Heart right ventricle (tissue), 16 donors: ENCODE measurements at regions of chr19 and their contacts with region 1.

Region 1: DNA sequence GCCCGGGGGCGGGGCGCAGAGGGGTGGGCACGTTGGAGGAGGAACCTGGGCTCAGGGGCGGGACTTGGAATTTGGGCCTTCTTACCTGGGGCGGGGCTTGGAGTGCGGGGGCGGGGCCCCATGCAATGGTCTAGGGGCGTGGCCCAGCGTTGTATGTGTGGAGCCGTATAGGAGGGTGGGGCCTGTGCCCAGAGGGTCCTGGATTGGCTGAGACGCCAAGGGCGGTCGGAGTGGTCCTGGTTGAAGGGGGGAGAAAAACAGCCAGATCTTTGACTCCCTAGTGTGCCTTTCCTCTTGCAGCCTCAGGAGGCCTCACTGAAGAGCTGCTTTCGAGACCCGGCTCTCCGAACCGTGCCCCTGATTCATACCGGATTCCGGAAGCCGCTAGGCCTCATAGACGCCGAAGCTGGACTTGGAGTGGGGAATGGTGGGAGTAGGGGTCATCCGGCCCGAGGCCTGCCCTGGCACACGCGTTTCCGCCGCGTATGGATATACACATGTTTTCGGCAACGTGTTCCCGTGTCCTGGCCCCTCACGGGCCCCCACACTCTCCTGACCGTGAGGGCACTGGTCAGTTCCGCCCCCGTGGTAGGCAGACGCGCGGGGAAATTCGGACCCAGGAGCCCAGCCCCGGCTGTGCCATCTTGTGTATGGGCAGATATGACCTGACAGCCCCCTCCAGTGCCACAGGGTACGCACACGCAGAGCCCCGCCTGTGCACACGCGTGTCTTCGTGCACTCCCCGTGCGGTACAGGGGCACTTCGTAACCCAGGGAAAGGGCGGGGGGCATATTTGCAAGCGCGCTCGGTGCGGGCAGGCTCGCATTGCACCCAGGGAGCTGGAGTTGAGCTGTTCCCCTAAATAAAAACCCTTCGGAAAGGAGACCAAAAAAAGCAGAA is 661 bp upstream of the PRR12 start:
- DNase-seq: peak; percentile 94 to 95
- ATAC-seq: peak; percentile 79 to 91 (median 88)
- H3K4me3 ChIP-seq: peak overlapping the region; percentile 65 to 89 (median 81)
- H3K27ac ChIP-seq: peak overlapping the region; percentile 76 to 98 (median 92)
- H3K4me1 ChIP-seq: peaks cover 6 to 37% (median 22%) of the 10 kb centered on the region in 9 donors
- H3K27me3 ChIP-seq: no peaks in the 10 kb centered on the region
- CTCF ChIP-seq: peak in 3 of 9 donors; percentile 10 to 25 (median 25)

Region 2: DNA sequence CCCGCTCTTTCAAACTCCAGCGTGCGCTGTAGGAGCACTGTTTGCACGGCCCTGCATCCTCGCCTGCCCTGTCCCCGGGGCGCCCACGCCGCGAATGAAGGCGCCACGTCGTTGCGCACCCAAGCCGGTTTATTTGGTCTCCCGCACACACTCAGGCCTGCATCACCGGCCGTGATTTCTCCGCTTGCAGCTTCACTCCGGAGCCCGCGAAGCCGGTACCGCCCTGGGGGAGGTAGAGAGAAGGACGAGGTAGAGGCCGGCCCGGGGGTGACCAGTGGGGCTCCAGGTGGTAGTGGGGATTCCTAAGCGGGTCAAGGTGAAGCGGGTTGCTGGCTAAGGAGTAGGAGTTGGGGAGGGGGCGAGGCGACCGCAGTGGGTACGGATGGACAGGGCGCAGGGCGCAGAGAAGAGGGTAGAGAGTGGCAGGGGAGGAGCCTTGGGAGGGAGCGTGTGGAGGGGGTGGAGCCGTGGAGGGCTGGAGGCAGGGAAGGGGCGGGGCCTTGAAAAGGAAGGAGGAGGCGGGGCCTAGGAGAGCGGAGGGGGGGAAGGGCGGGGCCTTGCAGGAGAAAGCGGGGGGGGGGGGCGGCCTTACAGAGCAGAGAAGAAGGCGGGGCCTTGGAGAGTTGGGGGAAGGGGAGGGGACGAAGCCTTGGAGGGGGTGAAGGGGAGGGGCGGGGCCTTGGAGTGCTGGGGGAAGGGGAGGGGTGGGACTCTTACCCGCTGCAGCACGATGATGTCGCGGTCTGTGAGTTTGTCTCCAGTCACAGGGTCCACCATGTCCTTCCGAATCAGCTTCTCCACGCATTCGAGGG is 34.5 kb before region 1 on chr19:
- intact Hi-C with region 1: no loop called
- DNase-seq: peak in 1 of 2 donors; percentile 47
- ATAC-seq: peak in 7 of 8 donors; percentile 26 to 54 (median 36)
- H3K4me3 ChIP-seq: no peak overlapping the region
- H3K27ac ChIP-seq: peak overlapping the region in 4 of 10 donors; percentile 15 to 70 (median 40)
- H3K4me1 ChIP-seq: peaks cover 0 to 54% (median 3%) of the 10 kb centered on the region in 9 donors
- H3K27me3 ChIP-seq: no peaks in the 10 kb centered on the region
- CTCF ChIP-seq: no peak

Region 3: GRCh38 chr19:49640113-49640898 is 50.0 kb after region 1 on chr19 and contains the start of gene RRAS:
- intact Hi-C with region 1: loop called in 7 of 10 experiments (anchors 1 to 5 kb)
- DNase-seq: peak; percentile 98 to 100
- ATAC-seq: peak; percentile 68 to 84 (median 78)
- H3K4me3 ChIP-seq: peak within 1 kb of the TSS; percentile 47 to 95 (median 88)
- H3K27ac ChIP-seq: peak within 1 kb of the TSS; percentile 96 to 100 (median 99)
- H3K4me1 ChIP-seq: peaks cover 2 to 75% (median 62%) of the 10 kb centered on the region in 9 donors
- H3K27me3 ChIP-seq: no peaks in the 10 kb centered on the region
- CTCF ChIP-seq: no peak
- total RNA-seq, gene RRAS: 90.4 to 141 (median 113) TPM

Region 4: GRCh38 chr19:49665351-49666119 is 75.2 kb after region 1 on chr19 and contains the starts of genes BCL2L12 and IRF3:
- intact Hi-C with region 1: loop called in 6 of 10 experiments (anchors 1 to 10 kb)
- DNase-seq: peak; percentile 97 to 98
- ATAC-seq: peak; percentile 88 to 97 (median 94)
- H3K4me3 ChIP-seq: peak within 1 kb of the TSS; percentile 50 to 94 (median 78)
- H3K27ac ChIP-seq: peak within 1 kb of the TSS; percentile 55 to 92 (median 89)
- H3K4me1 ChIP-seq: peaks cover 10 to 31% (median 19%) of the 10 kb centered on the region in 9 donors
- H3K27me3 ChIP-seq: no peaks in the 10 kb centered on the region
- CTCF ChIP-seq: no peak
- total RNA-seq, gene BCL2L12: 7.8 to 14.6 (median 9.8) TPM
- total RNA-seq, gene IRF3: 22.3 to 39.4 (median 24.7) TPM